ENCODE measurements at regions of chr3 and their contacts with region 1.

Region 1: DNA sequence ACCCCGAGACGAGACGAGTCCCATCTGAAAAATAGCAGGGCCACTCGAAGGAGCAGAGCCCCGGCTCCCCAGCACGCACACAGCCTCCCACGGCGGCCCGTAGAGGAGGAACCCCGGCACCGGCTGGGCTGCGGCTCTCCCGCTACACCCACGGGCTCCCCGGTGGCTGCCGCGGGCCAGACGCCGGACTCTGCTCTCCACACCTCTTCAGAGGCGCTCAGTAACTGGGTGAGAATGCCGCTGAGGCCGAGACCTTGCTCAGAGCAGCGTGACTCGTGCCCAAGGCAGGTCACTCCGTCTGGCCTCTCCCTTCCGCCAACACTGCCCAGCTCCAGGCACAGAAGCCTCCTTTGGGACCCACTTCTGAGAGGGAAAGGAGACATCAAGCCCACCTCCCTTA is 34.4 kb downstream of the TNK2 start:
- DNase-seq: no peak
- H3K4me3 ChIP-seq: no peak overlapping the region
- H3K27ac ChIP-seq: no peak overlapping the region
- H3K4me1 ChIP-seq: peaks cover 0 to 26% (median 14%) of the 10 kb centered on the region in 4 donors
- H3K27me3 ChIP-seq: no peaks in the 10 kb centered on the region
- CTCF ChIP-seq: no peak
- EP300 ChIP-seq: no peak
- POLR2A ChIP-seq: no peak

Region 2: DNA sequence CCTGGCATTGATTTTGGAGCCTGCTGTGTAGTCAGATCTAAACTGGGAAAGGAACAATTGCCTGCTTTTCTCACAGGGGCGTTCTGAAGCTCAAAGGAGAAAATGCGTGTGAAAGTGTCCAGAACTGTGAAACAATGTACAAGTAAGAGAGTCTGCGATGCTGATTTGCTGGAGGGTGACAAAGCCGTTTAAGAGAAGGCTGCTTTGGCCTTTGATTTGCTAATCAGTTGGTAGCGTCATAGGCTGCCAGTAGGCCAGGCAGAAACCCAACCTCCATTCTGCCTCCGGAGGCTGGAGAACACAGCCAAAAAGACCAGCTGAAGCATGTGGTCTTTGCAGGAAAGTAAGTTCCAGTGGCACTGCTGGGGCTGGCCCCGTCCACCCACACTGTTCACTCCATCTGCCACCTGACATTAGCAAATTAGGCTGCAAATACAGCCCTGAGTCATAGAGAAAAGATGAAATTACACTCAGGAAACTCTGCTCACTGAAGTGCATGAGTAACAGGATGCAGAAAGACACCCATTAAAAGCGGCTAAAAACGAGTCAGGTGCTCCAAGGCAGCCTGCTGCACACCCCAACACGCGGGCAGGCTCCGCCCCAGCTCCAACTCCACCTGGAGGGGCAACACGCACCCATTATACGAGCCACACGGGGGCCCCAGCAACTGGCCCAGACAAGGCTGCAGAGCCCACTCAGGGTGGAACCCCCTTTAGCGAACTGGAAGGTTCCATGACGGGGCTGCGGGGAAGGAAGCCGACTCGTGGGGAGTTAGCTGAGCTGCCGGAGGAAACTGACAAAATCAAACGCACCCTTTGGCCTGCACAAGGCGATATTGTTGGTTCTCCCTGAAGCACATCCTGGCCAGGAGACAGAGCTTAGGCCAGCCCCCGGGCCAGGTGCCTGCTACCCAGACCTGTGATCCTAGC is 305.7 kb after region 1 on chr3:
- in situ Hi-C with region 1: no loop called
- intact Hi-C with region 1: no loop called
- DNase-seq: peak; percentile 52
- H3K4me3 ChIP-seq: no peak overlapping the region
- H3K27ac ChIP-seq: peak overlapping the region; percentile 72 to 84 (median 78)
- H3K4me1 ChIP-seq: peaks cover 6 to 65% (median 39%) of the 10 kb centered on the region in 4 donors
- H3K27me3 ChIP-seq: no peaks in the 10 kb centered on the region
- CTCF ChIP-seq: no peak
- EP300 ChIP-seq: no peak
- POLR2A ChIP-seq: peak; percentile 22

Region 3: GRCh38 chr3:197590313-197590962 is 1716.5 kb after region 1 on chr3:
- in situ Hi-C with region 1: no loop called
- intact Hi-C with region 1: loop called (anchors 5 kb)
- DNase-seq: peak; percentile 86
- H3K4me3 ChIP-seq: no peak overlapping the region
- H3K27ac ChIP-seq: peak overlapping the region; percentile 81 to 89 (median 84)
- H3K4me1 ChIP-seq: peaks cover 8 to 44% (median 21%) of the 10 kb centered on the region in 4 donors
- H3K27me3 ChIP-seq: no peaks in the 10 kb centered on the region
- CTCF ChIP-seq: no peak
- EP300 ChIP-seq: peak; percentile 11
- POLR2A ChIP-seq: peak; percentile 57

Measured in transverse colon (tissue), 4 donors.